CD4-positive, alpha-beta T cell (primary cell): ENCODE measurements at regions of chr1 and their contacts with region 1.

Region 1: DNA sequence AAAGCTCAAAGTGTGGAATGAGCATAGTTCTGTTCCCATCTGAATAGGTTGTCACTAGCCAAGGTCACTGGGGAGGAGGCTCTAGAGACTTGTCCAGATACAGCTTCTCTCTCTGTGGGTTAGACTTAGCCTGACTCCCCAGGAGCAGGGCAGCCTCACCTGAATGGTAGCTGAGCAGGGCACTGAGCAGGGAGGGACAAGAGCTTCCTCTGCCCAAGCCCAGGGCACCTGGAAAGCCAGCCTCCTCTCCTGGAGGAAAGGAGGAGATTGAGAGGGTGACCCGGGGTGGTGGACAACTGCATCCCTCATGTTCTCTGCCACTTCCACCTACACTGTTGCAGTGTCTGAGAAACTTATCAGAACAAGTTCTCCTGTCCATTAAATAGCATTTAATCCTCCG is 59.0 kb upstream of the F3 start:
- DNase-seq: no peak
- ATAC-seq: no peak
- H3K4me3 ChIP-seq: no peak overlapping the region
- H3K4me3 Mint-ChIP-seq: no peak overlapping the region
- H3K27ac ChIP-seq: no peak overlapping the region
- H3K27ac Mint-ChIP-seq: no peak overlapping the region
- H3K4me1 ChIP-seq: peaks cover 7% of the 10 kb centered on the region
- H3K4me1 Mint-ChIP-seq: peaks cover 4% of the 10 kb centered on the region
- H3K27me3 ChIP-seq: no peaks in the 10 kb centered on the region
- H3K27me3 Mint-ChIP-seq: peaks cover 10% of the 10 kb centered on the region
- CTCF ChIP-seq: no peak

Region 2: GRCh38 chr1:94636624-94637023 is 36.1 kb after region 1 on chr1:
- CTCF ChIA-PET with region 1: no interaction called
- POLR2A ChIA-PET with region 1: no interaction called
- intact Hi-C with region 1: loop called in 1 of 2 experiments (anchors 2 kb)
- DNase-seq: no peak
- ATAC-seq: no peak
- H3K4me3 ChIP-seq: no peak overlapping the region
- H3K4me3 Mint-ChIP-seq: no peak overlapping the region
- H3K27ac ChIP-seq: no peak overlapping the region
- H3K27ac Mint-ChIP-seq: no peak overlapping the region
- H3K4me1 ChIP-seq: no peaks in the 10 kb centered on the region
- H3K4me1 Mint-ChIP-seq: no peaks in the 10 kb centered on the region
- H3K27me3 ChIP-seq: peaks cover 0 to 3% of the 10 kb centered on the region in 2 experiments
- H3K27me3 Mint-ChIP-seq: peaks cover 7% of the 10 kb centered on the region
- CTCF ChIP-seq: no peak

Region 3: DNA sequence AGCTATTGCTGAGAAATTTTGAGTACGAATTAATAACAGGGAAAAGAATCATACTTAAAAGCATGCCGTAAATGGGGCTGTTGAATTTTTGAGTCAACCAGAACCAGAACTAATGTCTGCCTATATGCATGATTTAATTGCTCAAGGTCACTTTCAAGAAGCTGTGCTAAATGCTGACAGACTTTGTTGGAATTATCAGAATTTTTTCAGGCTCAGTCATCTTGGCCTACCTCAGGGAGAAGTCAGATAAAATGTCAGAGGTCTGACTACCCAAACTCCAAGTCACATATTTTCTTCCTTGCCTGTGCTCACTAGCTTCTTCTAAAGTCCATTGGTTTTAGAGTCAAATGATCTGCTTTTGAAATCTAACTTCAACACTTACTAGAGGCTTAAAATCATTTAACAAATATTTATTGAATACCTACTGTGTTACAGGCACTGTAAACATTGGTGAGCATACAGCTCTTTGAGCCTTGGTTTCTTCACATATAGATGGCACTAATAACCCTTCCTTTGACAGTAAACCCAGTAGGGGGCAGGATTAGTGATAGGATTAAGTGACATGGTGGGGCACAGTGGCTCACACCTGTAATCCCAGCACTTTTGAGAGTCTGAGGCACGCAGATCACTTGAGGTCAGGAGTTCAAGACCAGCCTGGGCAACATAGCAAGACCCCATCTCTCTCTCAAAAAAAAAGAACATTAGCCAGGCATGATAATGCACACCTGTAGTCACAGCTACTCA is 98.4 kb after region 1 on chr1:
- CTCF ChIA-PET with region 1: no interaction called
- POLR2A ChIA-PET with region 1: no interaction called
- intact Hi-C with region 1: no loop called
- DNase-seq: no peak
- ATAC-seq: no peak
- H3K4me3 ChIP-seq: no peak overlapping the region
- H3K4me3 Mint-ChIP-seq: no peak overlapping the region
- H3K27ac ChIP-seq: no peak overlapping the region
- H3K27ac Mint-ChIP-seq: no peak overlapping the region
- H3K4me1 ChIP-seq: no peaks in the 10 kb centered on the region
- H3K4me1 Mint-ChIP-seq: no peaks in the 10 kb centered on the region
- H3K27me3 ChIP-seq: peaks cover 0 to 3% of the 10 kb centered on the region in 2 experiments
- H3K27me3 Mint-ChIP-seq: peaks cover 4% of the 10 kb centered on the region
- CTCF ChIP-seq: no peak